ENCODE measurements at regions of chr9 and their contacts with region 1.

Region 1: DNA sequence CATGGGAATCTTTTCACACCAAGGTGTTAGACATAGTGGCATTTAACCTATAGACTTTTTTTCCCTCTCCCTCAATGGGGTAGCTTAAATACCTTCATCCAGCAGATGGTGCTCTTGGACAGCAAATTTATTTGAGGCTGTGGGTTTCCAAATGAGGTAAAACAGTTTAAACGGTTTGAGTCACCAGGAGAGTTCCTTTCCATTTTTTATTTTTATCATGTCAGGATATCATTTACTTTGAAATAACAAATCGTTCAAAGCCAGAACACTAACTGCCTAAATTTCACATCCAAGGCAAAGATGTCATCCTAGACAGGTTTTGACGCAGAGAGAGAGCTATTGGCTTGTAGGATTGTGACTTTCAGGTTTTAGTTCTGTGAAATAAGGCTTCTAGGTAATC is 69.7 kb downstream of the KDM4C start:
- DNase-seq: no peak
- H3K4me3 ChIP-seq: no peak overlapping the region
- H3K27me3 ChIP-seq: no peaks in the 10 kb centered on the region
- CTCF ChIP-seq: peak; percentile 59

Region 2: GRCh38 chr9:6816581-6816980 is 10.9 kb before region 1 on chr9:
- CTCF ChIA-PET with region 1: interaction called, 11 read pairs
- POLR2A ChIA-PET with region 1: no interaction called
- DNase-seq: no peak
- H3K4me3 ChIP-seq: no peak overlapping the region
- H3K27me3 ChIP-seq: no peaks in the 10 kb centered on the region
- CTCF ChIP-seq: no peak

Region 3: DNA sequence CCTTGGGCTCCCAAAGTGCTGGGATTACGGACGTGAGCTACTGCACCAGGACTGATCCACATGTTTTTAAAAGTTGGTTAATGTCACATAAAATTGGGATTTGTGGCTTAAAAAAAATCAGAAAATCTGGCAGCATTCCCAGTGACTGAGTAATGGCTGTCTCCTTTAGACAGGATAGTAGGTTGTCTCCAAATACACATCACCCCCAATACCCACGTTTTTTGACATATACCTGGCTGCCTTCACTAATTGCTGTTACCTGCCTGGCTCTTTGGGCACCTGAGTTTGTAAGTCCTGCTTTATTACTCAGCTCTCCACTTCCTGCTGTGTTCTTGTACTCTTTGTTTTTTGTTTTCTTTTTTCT is 15.1 kb after region 1 on chr9:
- CTCF ChIA-PET with region 1: interaction called, 13 read pairs
- POLR2A ChIA-PET with region 1: no interaction called
- DNase-seq: no peak
- H3K4me3 ChIP-seq: no peak overlapping the region
- H3K27me3 ChIP-seq: no peaks in the 10 kb centered on the region
- CTCF ChIP-seq: no peak

Region 4: DNA sequence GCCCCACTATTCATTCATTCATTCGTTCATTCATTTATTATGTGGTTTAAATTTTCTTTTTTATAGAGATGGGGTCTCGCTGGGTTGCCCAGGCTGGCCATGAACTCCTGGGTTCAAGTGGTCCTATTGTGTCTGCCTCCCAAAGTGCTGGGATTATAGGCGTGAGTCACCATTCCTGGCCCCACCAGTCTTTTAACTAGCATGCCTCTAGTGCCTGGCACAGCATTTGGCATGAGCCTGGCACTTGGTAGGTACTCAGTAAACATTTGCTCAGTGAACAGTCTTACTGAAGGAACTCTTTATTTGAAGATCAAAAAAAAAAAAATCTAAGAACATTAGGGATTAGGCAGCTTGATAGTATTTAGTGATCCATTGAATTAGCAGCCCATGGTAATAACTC is 28.4 kb after region 1 on chr9:
- CTCF ChIA-PET with region 1: no interaction called
- POLR2A ChIA-PET with region 1: no interaction called
- DNase-seq: no peak
- H3K4me3 ChIP-seq: no peak overlapping the region
- H3K27me3 ChIP-seq: no peaks in the 10 kb centered on the region
- CTCF ChIP-seq: no peak

Region 5: GRCh38 chr9:6893350-6894131 is 66.1 kb after region 1 on chr9:
- CTCF ChIA-PET with region 1: no interaction called
- POLR2A ChIA-PET with region 1: no interaction called
- DNase-seq: no peak
- H3K4me3 ChIP-seq: no peak overlapping the region
- H3K27me3 ChIP-seq: no peaks in the 10 kb centered on the region
- CTCF ChIP-seq: no peak